Panc1 (cell line): ENCODE measurements at regions of chr18 and their contacts with region 1.

Region 1: GRCh38 chr18:36706134-36706881 is 122.5 kb downstream of the TPGS2 start:
- DNase-seq: no peak
- ATAC-seq: no peak
- H3K4me3 ChIP-seq: no peak overlapping the region
- H3K27ac ChIP-seq: no peak overlapping the region
- H3K4me1 ChIP-seq: no peaks in the 10 kb centered on the region
- H3K27me3 ChIP-seq: no peaks in the 10 kb centered on the region
- CTCF ChIP-seq: no peak

Region 2: GRCh38 chr18:36757081-36757480 is 50.8 kb after region 1 on chr18:
- CTCF ChIA-PET with region 1: no interaction called
- POLR2A ChIA-PET with region 1: no interaction called
- in situ Hi-C with region 1: no loop called
- intact Hi-C with region 1: no loop called
- DNase-seq: peak; percentile 27
- ATAC-seq: peak; percentile 87
- H3K4me3 ChIP-seq: no peak overlapping the region
- H3K27ac ChIP-seq: no peak overlapping the region
- H3K4me1 ChIP-seq: no peaks in the 10 kb centered on the region
- H3K27me3 ChIP-seq: no peaks in the 10 kb centered on the region
- CTCF ChIP-seq: peak; percentile 63; the same call in 1 of the 2 replicates

Region 3: DNA sequence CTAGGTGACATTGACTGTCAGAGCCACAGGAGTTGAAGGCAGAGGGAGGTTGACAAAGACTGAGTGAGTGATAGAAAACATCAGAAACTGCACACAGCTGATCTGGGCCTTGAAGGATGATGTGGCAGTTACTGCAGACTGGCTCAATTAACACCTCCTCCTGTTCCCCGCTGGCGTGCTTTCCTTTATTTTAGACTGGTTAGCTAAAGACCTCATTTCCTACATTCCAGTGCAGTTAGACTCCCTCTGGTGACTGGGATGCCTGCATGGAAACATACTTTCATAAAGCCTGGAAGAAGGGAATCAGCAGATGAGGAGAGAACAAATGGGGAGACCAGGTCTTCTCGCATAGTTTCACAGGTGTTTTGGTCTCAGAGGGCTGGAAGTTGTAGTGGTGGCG is 115.4 kb after region 1 on chr18:
- CTCF ChIA-PET with region 1: no interaction called
- POLR2A ChIA-PET with region 1: interaction called, 18 read pairs
- in situ Hi-C with region 1: no loop called
- intact Hi-C with region 1: no loop called
- DNase-seq: no peak
- ATAC-seq: no peak
- H3K4me3 ChIP-seq: no peak overlapping the region
- H3K27ac ChIP-seq: no peak overlapping the region
- H3K4me1 ChIP-seq: no peaks in the 10 kb centered on the region
- H3K27me3 ChIP-seq: no peaks in the 10 kb centered on the region
- CTCF ChIP-seq: no peak